ENCODE measurements at regions of chr14 and their contacts with region 1.

Region 1: DNA sequence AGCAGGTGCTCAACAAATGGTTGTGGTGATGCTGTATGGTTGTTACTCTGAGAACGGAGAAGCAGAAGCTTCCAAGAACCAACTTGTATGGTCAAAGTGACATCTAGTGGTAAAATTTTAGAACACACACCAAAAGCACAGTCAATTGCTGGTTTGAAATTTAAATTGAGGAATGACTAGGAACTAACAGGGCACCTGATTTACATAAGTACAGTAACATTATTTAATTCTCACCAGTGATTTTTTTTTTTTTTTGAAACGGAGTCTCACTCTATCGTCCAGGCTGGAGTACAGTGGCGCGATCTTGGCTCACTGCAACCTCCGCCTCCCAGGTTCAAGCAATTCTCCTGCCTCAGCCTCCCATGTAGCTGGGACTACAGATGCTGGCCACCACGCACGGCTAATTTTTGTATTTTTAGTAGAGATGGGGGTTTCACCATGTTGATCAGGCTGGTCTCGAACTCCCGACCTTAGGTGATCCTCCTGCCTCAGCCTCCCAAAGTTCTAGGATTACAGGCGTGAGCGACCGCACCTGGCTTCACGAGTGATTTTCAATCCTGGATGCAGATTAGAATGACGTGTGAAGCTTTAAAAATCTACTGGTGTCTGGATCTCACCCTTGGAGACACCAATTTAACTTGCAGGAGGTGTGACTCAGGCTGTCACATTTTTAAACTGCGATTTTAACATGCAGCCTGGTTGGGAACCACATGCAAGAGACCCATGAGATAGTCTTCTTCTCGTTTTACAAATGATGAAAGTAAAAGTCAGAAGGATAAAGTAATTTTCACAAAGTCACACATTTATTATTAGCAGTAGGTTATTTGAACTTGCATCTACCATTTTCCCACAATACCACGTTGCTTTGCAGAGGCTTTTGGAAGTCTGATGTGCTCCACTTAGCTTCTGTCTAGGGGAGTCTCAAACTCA is 14.1 kb upstream of the NUMB start:
- DNase-seq: peak in 1 of 2 donors; percentile 77
- ATAC-seq: peak; percentile 84 to 91 (median 86)
- H3K4me3 ChIP-seq: no peak overlapping the region
- H3K4me3 Mint-ChIP-seq: no peak overlapping the region
- H3K27ac ChIP-seq: no peak overlapping the region
- H3K27ac Mint-ChIP-seq: no peak overlapping the region
- H3K4me1 ChIP-seq: no peaks in the 10 kb centered on the region
- H3K4me1 Mint-ChIP-seq: peaks cover 0 to 6% of the 10 kb centered on the region in 2 donors
- H3K27me3 ChIP-seq: no peaks in the 10 kb centered on the region
- H3K27me3 Mint-ChIP-seq: peaks cover 0 to 8% of the 10 kb centered on the region in 2 donors
- CTCF ChIP-seq: peak; percentile 74

Region 2: GRCh38 chr14:73173092-73173735 is 299.2 kb before region 1 on chr14:
- intact Hi-C with region 1: loop called (anchors 1 kb)
- DNase-seq: peak in 1 of 2 donors; percentile 56
- ATAC-seq: peak; percentile 44 to 48 (median 47)
- H3K4me3 ChIP-seq: no peak overlapping the region
- H3K4me3 Mint-ChIP-seq: no peak overlapping the region
- H3K27ac ChIP-seq: no peak overlapping the region
- H3K27ac Mint-ChIP-seq: peak overlapping the region; percentile 4 to 39
- H3K4me1 ChIP-seq: no peaks in the 10 kb centered on the region
- H3K4me1 Mint-ChIP-seq: peaks cover 7 to 9% of the 10 kb centered on the region in 2 donors
- H3K27me3 ChIP-seq: no peaks in the 10 kb centered on the region
- H3K27me3 Mint-ChIP-seq: no peaks in the 10 kb centered on the region
- CTCF ChIP-seq: no peak

Region 3: DNA sequence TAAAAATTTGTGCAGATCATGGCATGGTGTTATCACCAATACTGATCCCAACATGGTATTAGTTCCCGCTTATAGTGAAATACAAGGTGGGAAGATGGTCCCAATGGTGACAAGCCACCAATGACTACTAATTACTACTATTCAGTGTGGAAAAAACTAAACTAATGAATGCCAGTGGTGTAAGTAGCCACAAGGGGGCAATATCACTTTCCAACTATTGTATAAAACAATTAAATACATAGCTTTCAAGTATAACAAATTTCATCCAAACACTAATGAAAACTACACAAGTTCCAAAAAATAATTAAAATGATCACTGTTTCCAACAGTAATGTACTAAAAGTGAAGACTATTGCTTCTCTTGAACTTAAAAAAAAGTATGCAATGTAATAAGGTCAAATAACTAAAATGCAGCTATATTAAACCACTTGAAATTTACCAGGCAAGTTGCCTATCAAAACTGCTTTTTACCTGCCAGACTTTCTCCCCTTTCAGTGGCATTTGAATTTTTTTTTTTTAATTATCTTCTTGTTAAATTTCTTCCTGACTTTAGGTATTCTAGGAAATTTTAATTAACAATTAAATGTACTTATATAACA is 177.2 kb before region 1 on chr14:
- intact Hi-C with region 1: loop called (anchors 1 kb)
- DNase-seq: peak in 1 of 2 donors; percentile 67
- ATAC-seq: peak in 2 of 3 donors; percentile 57 to 60
- H3K4me3 ChIP-seq: no peak overlapping the region
- H3K4me3 Mint-ChIP-seq: no peak overlapping the region
- H3K27ac ChIP-seq: no peak overlapping the region
- H3K27ac Mint-ChIP-seq: no peak overlapping the region
- H3K4me1 ChIP-seq: no peaks in the 10 kb centered on the region
- H3K4me1 Mint-ChIP-seq: no peaks in the 10 kb centered on the region
- H3K27me3 ChIP-seq: no peaks in the 10 kb centered on the region
- H3K27me3 Mint-ChIP-seq: no peaks in the 10 kb centered on the region
- CTCF ChIP-seq: peak; percentile 81

Region 4: GRCh38 chr14:73458151-73458976 is 14.1 kb before region 1 on chr14 and contains the start of gene NUMB:
- intact Hi-C with region 1: loop called (anchors 1 kb)
- DNase-seq: peak; percentile 90 to 98
- ATAC-seq: peak; percentile 96 to 100 (median 97)
- H3K4me3 ChIP-seq: peak within 1 kb of the TSS; percentile 93
- H3K4me3 Mint-ChIP-seq: peak within 1 kb of the TSS; percentile 99
- H3K27ac ChIP-seq: peak within 1 kb of the TSS; percentile 53
- H3K27ac Mint-ChIP-seq: peak within 1 kb of the TSS; percentile 90 to 95
- H3K4me1 ChIP-seq: peaks cover 15% of the 10 kb centered on the region
- H3K4me1 Mint-ChIP-seq: peaks cover 38 to 43% of the 10 kb centered on the region in 2 donors
- H3K27me3 ChIP-seq: no peaks in the 10 kb centered on the region
- H3K27me3 Mint-ChIP-seq: peaks cover 6 to 7% of the 10 kb centered on the region in 2 donors
- CTCF ChIP-seq: no peak
- total RNA-seq, gene NUMB: 50.0 to 67.4 (median 56.3) TPM

Region 5: DNA sequence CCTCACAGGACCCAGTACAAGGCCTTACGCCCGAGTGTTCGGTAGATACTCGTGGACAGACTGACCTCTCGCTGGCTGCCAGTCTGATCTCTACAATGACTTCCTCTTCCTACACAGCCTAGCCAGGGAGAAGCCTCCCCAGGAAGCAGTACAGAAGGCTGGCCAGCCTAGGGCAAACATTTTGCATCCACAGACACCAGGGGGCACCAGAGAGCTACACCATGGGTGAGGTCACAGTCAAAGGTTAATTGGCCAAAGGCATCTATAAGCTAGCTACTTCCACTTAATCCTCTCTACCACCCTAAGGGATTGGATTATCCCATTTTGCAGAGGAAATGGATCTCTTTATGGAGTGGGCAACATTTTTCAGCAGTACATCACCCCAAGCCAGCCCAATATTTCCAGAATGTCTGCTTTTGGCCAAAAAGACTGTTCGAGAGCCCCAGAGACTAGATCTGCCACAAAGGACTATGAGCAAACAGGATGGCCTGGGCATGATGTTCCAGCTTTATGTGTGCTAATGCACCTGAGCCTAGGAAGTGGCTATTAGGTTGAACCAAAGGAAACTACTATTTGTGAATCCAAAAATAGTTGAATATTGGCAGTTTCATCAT is 256.4 kb after region 1 on chr14:
- intact Hi-C with region 1: no loop called
- DNase-seq: peak; percentile 83 to 92
- ATAC-seq: peak; percentile 89 to 97 (median 90)
- H3K4me3 ChIP-seq: no peak overlapping the region
- H3K4me3 Mint-ChIP-seq: no peak overlapping the region
- H3K27ac ChIP-seq: no peak overlapping the region
- H3K27ac Mint-ChIP-seq: peak overlapping the region; percentile 67 to 74
- H3K4me1 ChIP-seq: peaks cover 7% of the 10 kb centered on the region
- H3K4me1 Mint-ChIP-seq: peaks cover 16 to 24% of the 10 kb centered on the region in 2 donors
- H3K27me3 ChIP-seq: no peaks in the 10 kb centered on the region
- H3K27me3 Mint-ChIP-seq: no peaks in the 10 kb centered on the region
- CTCF ChIP-seq: peak; percentile 92

Measured in natural killer cell (primary cell).